ENCODE measurements at regions of chr10 and their contacts with region 1.

Region 1: DNA sequence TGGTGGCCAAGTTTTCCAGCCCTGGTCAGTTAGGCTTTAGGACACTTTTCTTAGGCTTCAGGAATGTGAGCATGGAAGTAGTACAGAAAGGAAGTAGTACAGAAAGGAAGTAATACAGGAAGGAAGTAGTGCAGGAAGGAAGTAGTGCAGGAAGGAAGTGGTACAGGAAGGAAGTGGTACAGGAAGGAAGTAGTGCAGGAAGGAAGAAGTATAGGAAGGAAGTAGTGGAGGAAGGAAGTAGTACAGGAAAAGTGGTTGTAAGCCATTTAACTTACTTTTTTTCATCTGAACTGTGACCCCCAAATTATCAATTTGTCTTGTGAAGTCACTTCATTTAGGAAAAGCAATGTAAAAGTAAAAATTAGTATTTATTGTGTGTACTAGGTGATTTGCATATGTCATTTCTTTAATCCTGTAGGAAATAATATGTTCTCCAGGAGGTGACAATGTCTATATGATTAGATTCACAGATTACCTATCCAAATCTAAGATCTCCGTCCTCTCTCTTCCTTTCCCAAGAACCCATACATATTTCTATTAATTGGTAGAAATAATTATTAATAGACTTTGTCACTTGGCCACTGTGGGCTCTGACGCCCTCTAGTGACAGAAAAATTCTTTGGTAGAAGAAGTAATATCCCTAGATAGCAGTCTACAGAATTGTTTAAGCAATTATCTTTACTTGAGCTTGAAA is 3.9 kb upstream of the FAS start:
- DNase-seq: no peak
- H3K4me3 ChIP-seq: no peak overlapping the region
- H3K27ac ChIP-seq: peak overlapping the region; percentile 10
- H3K4me1 ChIP-seq: peaks cover 71% of the 10 kb centered on the region
- H3K27me3 ChIP-seq: no peaks in the 10 kb centered on the region
- CTCF ChIP-seq: peak; percentile 89

Region 2: DNA sequence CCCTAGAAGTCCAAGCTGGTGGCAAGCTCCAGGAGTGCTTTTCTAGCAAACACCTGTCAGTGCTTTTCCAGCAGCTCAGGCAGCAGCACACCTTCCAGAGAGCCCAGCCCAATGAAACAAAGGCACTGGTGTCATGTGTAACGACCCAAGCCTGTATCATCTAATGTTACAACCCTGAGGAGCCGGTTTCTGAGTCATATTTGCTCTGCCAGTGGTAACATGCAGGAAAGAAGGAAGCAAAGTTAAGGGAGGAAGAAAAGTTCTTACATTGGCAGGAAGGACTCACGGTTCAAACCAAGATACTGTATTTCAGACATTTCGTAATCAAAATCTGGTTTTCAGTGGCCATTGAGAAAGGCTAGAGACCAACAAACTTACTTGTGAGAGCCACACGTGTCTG is 135.0 kb before region 1 on chr10 and contains the start of gene ANKRD22:
- intact Hi-C with region 1: no loop called
- DNase-seq: no peak
- H3K4me3 ChIP-seq: no peak within 1 kb of the TSS
- H3K27ac ChIP-seq: no peak within 1 kb of the TSS
- H3K4me1 ChIP-seq: no peaks in the 10 kb centered on the region
- H3K27me3 ChIP-seq: no peaks in the 10 kb centered on the region
- CTCF ChIP-seq: no peak
- total RNA-seq, gene ANKRD22: not detected

Region 3: DNA sequence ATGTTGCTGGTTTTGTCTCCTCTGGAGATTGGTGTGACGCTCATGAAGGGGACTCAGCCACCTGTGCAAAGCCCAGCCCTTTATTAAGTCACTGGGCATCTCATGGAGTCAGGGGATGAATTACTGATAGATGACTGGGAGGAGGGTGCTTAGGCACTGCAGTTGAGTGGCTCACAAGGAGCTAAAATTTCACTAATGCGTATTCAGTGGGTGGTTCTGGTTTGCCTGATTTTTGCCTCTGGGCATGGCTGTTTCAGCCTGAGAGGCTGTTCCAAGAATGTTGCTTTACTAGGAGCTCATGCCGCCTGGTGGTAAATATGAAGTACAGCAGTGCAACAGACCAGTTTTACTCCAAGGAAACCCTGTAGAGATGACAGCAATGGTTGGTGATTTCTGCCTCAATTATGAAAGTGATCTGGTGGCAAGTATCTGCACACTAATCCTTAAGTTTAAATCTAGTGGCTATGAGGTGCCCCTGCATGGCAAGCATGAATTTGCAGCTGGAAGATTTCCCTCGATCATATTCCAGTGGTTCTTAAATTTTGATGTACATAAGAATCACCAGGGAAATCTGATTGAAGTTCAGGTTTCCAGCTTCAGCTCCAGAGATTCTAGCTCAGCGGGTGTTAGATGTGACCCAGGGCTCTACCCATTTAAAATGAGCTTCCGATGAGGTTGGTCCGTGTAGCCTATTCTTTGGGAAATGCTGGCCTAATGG is 54.0 kb before region 1 on chr10:
- intact Hi-C with region 1: loop called (anchors 2 kb)
- DNase-seq: no peak
- H3K4me3 ChIP-seq: no peak overlapping the region
- H3K27ac ChIP-seq: peak overlapping the region; percentile 45
- H3K4me1 ChIP-seq: peaks cover 39% of the 10 kb centered on the region
- H3K27me3 ChIP-seq: no peaks in the 10 kb centered on the region
- CTCF ChIP-seq: peak; percentile 94